PC-9 (cell line): ENCODE measurements at regions of chr3 and their contacts with region 1.

Region 1: DNA sequence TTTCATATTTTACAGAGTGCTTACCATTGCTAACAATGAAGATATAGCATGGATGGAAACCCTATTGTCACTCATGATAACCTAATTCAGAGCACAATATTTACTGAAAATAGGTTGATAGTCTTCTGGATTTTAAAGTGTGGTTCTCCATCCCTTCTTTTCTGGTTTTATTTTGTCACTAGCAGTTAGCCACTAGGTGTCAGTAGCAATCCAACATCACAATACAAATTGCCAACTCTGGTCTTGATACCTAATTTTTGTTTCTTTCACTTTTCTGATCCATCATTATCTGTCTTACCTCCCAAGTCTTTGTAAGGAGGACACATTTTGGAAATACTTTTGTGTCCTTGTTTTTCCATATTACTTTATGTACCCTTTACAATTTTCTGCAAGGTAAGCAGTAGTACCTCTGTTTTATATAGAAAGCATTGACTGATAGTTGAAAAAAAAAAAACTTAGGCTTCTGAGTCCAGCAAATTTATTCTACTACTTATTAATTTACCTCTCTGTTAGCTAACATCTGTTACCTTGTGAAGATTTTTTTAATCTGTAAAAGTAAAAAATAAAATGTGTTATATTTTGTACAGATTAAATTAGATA is 28.3 kb upstream of the CRYBG3 start:
- DNase-seq: peak in 1 of 2 experiments; percentile 59
- H3K4me3 ChIP-seq: no peak overlapping the region
- H3K27ac ChIP-seq: no peak overlapping the region
- H3K4me1 ChIP-seq: no peaks in the 10 kb centered on the region
- H3K27me3 ChIP-seq: no peaks in the 10 kb centered on the region
- CTCF ChIP-seq: peak; percentile 97

Region 2: DNA sequence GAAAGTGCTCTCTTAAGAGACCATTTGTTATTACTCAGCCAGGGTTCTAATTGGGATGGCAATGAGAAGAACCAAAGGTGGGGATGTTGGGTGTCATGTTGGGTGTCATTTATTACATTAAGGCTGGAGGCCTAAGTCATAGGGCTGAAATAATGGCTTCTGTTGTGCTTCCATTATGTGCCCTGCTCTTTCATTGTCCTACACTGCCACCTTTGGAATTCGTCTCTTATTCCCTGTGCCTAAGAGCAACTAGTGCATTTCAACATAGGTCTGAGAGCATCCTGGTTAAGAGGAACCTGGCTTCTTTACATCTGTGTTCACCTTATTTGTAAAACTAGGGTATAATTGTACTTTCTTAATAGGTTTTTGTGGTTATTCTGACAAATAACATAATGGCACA is 146.5 kb after region 1 on chr3:
- CTCF ChIA-PET with region 1: no interaction called
- POLR2A ChIA-PET with region 1: no interaction called
- intact Hi-C with region 1: loop called (anchors 2 kb)
- DNase-seq: no peak
- H3K4me3 ChIP-seq: no peak overlapping the region
- H3K27ac ChIP-seq: no peak overlapping the region
- H3K4me1 ChIP-seq: no peaks in the 10 kb centered on the region
- H3K27me3 ChIP-seq: no peaks in the 10 kb centered on the region
- CTCF ChIP-seq: 0 out of 2 replicates have a peak, but pooled peaks have one; percentile 31